ENCODE measurements at regions of chr17 and their contacts with region 1.

Region 1: DNA sequence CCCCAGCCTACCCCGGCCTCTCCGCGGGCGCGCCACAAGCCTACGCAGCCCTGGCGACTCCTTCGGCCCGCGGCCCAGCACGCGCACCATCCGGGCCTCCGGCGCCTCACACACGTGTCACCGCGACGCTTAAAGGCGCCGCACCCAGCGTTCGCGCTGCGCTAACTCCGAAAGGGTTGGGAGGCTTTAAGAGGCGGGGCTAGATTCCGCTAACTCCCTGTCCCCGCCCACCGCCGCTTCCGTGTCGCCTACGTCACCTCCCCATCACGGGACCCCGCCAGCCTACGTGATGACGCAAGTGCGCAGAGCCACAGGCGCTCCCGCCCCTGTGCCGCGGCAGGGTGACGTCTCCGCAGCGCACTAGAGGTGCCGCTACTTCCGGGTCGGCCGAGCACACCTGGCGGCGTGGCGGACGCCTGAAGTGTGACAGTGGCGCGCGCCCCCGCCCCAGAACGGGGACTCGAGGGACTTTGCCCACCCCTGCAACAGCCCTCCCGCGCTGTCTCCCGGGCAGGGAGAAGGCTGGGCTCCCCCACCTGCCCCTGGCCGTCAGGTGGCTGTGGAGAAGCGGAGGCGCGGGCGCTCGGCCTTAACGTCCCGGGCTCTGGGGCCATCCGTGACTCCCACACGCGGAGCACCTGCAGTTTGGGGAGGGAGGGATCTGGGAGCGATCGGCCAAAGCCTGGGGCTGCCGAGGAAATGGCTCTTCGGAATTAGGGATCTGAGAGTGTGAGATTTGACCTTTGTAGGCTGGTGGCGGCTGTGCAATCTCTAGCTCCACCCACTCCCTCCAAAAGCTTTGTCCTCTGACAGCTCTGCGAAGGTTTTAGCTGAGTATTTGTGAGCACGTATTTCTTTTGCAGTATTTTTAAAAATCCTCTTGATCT is at the start of gene USP36:
- DNase-seq: peak; percentile 99 to 100 (median 100)
- ATAC-seq: peak; percentile 84
- H3K4me3 ChIP-seq: peak within 1 kb of the TSS; percentile 70 to 86
- H3K4me3 Mint-ChIP-seq: peak within 1 kb of the TSS; percentile 99
- H3K27ac ChIP-seq: peak within 1 kb of the TSS; percentile 98
- H3K27ac Mint-ChIP-seq: peak within 1 kb of the TSS; percentile 97
- H3K4me1 ChIP-seq: peaks cover 32% of the 10 kb centered on the region
- H3K4me1 Mint-ChIP-seq: peaks cover 49% of the 10 kb centered on the region
- H3K27me3 ChIP-seq: no peaks in the 10 kb centered on the region
- H3K27me3 Mint-ChIP-seq: no peaks in the 10 kb centered on the region
- CTCF ChIP-seq: no peak
- total RNA-seq, gene USP36: 755 to 805 TPM

Region 2: GRCh38 chr17:78360371-78361224 is 480.4 kb before region 1 on chr17:
- CTCF ChIA-PET with region 1: no interaction called
- POLR2A ChIA-PET with region 1: no interaction called
- intact Hi-C with region 1: loop called in 1 of 2 experiments (anchors 2 kb)
- DNase-seq: peak; percentile 79 to 95 (median 87)
- ATAC-seq: no peak
- H3K4me3 ChIP-seq: peak overlapping the region; percentile 56 to 64
- H3K4me3 Mint-ChIP-seq: peak overlapping the region; percentile 88
- H3K27ac ChIP-seq: peak overlapping the region; percentile 6 to 62
- H3K27ac Mint-ChIP-seq: peak overlapping the region; percentile 87
- H3K4me1 ChIP-seq: peaks cover 31% of the 10 kb centered on the region
- H3K4me1 Mint-ChIP-seq: peaks cover 43% of the 10 kb centered on the region
- H3K27me3 ChIP-seq: no peaks in the 10 kb centered on the region
- H3K27me3 Mint-ChIP-seq: no peaks in the 10 kb centered on the region
- CTCF ChIP-seq: peak; percentile 84

Region 3: GRCh38 chr17:78497115-78497540 is 343.8 kb before region 1 on chr17:
- CTCF ChIA-PET with region 1: interaction called, 4 read pairs
- POLR2A ChIA-PET with region 1: no interaction called
- intact Hi-C with region 1: loop called in 1 of 2 experiments (anchors 5 kb)
- DNase-seq: peak in 8 of 9 experiments; percentile 16 to 69 (median 48)
- ATAC-seq: peak; percentile 55
- H3K4me3 ChIP-seq: no peak overlapping the region
- H3K4me3 Mint-ChIP-seq: no peak overlapping the region
- H3K27ac ChIP-seq: no peak overlapping the region
- H3K27ac Mint-ChIP-seq: no peak overlapping the region
- H3K4me1 ChIP-seq: no peaks in the 10 kb centered on the region
- H3K4me1 Mint-ChIP-seq: no peaks in the 10 kb centered on the region
- H3K27me3 ChIP-seq: no peaks in the 10 kb centered on the region
- H3K27me3 Mint-ChIP-seq: no peaks in the 10 kb centered on the region
- CTCF ChIP-seq: peak; percentile 36

Region 4: DNA sequence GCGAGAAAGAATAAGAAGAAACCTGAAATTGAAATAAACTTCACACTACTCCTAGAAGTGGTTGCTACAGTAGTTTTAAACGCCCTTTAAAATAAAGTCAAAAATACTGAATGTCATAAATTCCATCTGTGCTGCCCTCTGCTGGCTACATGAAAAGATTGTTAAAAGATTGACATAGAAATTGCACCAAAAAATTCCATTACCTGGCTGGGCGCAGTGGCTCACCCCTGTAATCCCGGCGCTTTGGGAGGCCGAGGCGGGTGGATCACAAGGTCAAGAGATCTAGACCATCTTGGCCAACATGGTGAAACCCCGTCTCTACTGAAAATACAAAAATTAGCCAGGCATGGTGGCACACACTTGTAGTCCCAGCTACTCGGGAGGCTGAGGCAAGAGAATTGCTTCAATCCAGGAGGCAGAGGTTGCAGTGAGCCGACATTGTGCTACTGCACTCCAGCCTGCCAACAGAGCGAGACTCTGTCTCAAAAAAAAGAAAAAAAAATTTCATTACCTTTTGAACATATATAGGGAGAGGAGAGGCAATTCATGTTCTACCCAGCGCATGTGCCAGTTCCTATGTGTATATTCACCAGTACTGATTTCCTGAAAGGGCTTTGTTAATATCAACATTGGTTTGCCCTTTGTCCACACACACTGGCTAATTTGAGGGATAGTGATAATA is 95.4 kb before region 1 on chr17:
- CTCF ChIA-PET with region 1: interaction called, 3 read pairs
- POLR2A ChIA-PET with region 1: no interaction called
- intact Hi-C with region 1: loop called in 1 of 2 experiments (anchors 2 kb)
- DNase-seq: peak in 6 of 9 experiments; percentile 40 to 80 (median 62)
- ATAC-seq: no peak
- H3K4me3 ChIP-seq: no peak overlapping the region
- H3K4me3 Mint-ChIP-seq: peak overlapping the region; percentile 63
- H3K27ac ChIP-seq: peak overlapping the region; percentile 2 to 84
- H3K27ac Mint-ChIP-seq: peak overlapping the region; percentile 91
- H3K4me1 ChIP-seq: peaks cover 95% of the 10 kb centered on the region
- H3K4me1 Mint-ChIP-seq: peaks cover 93% of the 10 kb centered on the region
- H3K27me3 ChIP-seq: no peaks in the 10 kb centered on the region
- H3K27me3 Mint-ChIP-seq: no peaks in the 10 kb centered on the region
- CTCF ChIP-seq: peak; percentile 87

Region 5: GRCh38 chr17:78806451-78806850 is 34.5 kb before region 1 on chr17:
- CTCF ChIA-PET with region 1: interaction called, 6 read pairs
- POLR2A ChIA-PET with region 1: interaction called, 3 read pairs
- intact Hi-C with region 1: loop called in 1 of 2 experiments (anchors 5 kb)
- DNase-seq: peak in 6 of 9 experiments; percentile 39 to 85 (median 76)
- ATAC-seq: peak; percentile 69
- H3K4me3 ChIP-seq: no peak overlapping the region
- H3K4me3 Mint-ChIP-seq: peak overlapping the region; percentile 57
- H3K27ac ChIP-seq: peak overlapping the region in 1 of 2 experiments; percentile 30
- H3K27ac Mint-ChIP-seq: peak overlapping the region; percentile 85
- H3K4me1 ChIP-seq: peaks cover 34% of the 10 kb centered on the region
- H3K4me1 Mint-ChIP-seq: peaks cover 55% of the 10 kb centered on the region
- H3K27me3 ChIP-seq: no peaks in the 10 kb centered on the region
- H3K27me3 Mint-ChIP-seq: no peaks in the 10 kb centered on the region
- CTCF ChIP-seq: peak; percentile 58

Region 6: DNA sequence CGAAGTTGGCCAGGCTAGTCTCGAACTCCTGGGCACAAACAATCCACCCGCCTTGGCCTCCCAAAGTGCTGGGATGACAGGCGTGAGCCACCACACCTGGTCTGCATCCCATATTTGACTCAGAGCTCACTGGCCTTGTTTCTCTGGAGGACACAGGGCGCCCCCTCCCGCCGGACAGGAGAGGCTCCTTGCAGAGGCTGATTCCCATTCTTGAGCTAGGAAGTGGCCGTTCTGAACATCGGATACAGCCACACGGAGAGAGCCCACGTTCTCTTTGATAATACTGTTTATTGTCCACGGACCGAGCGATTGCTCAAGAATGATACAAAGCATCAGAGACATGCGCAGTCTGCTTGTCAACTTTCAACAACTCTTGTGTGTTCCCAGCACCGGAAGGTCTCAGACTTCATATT is 11.7 kb after region 1 on chr17:
- CTCF ChIA-PET with region 1: no interaction called
- POLR2A ChIA-PET with region 1: no interaction called
- intact Hi-C with region 1: no loop called
- DNase-seq: no peak
- ATAC-seq: no peak
- H3K4me3 ChIP-seq: no peak overlapping the region
- H3K4me3 Mint-ChIP-seq: no peak overlapping the region
- H3K27ac ChIP-seq: no peak overlapping the region
- H3K27ac Mint-ChIP-seq: no peak overlapping the region
- H3K4me1 ChIP-seq: no peaks in the 10 kb centered on the region
- H3K4me1 Mint-ChIP-seq: no peaks in the 10 kb centered on the region
- H3K27me3 ChIP-seq: no peaks in the 10 kb centered on the region
- H3K27me3 Mint-ChIP-seq: no peaks in the 10 kb centered on the region
- CTCF ChIP-seq: no peak

Region 7: DNA sequence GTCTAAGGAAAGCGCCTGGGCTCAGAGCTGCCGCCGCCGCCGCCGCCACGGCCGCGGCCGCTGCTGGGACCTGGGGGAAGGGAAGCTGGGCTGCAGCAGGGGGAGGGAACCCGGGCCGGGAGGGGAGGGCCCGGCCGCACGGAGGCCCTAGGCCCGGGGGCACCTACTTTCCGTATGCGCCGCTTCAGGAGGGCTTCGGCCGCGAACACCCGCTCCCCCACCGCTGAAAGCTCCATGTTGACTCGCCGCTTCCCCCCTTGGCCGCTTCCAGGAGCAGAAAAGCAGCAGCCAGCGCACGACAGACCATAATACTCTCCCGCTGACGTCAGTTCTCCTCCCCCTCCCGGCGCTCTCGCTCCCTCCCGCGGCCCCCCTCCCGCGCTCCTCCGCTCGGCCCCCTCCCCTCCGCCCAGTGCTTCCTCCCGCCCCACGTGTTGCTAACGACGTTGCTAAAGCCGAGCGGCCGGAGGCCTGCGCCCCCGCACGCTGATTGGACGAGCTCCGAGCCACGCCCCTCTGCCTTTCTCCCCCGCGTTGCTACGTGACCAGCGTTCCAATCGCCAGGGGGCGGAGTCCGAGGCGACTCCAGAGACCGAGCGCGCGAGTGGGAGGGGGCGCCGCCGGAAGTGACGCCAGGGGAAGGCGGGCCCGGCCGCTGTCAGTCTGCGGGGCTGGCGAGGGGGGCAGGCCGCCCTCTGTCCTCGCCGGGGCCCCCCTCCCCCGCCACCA is 956.0 kb after region 1 on chr17 and contains the start of gene CBX8:
- CTCF ChIA-PET with region 1: no interaction called
- POLR2A ChIA-PET with region 1: no interaction called
- intact Hi-C with region 1: loop called in 1 of 2 experiments (anchors 10 kb)
- DNase-seq: peak; percentile 98 to 100 (median 99)
- ATAC-seq: peak; percentile 87
- H3K4me3 ChIP-seq: peak within 1 kb of the TSS; percentile 51 to 68
- H3K4me3 Mint-ChIP-seq: peak within 1 kb of the TSS; percentile 86
- H3K27ac ChIP-seq: peak within 1 kb of the TSS; percentile 60 to 72
- H3K27ac Mint-ChIP-seq: peak within 1 kb of the TSS; percentile 91
- H3K4me1 ChIP-seq: peaks cover 48% of the 10 kb centered on the region
- H3K4me1 Mint-ChIP-seq: peaks cover 38% of the 10 kb centered on the region
- H3K27me3 ChIP-seq: peaks cover 47 to 48% of the 10 kb centered on the region in 2 experiments
- H3K27me3 Mint-ChIP-seq: peaks cover 37% of the 10 kb centered on the region
- CTCF ChIP-seq: no peak
- total RNA-seq, gene CBX8: 3.7 to 4.0 TPM